ENCODE measurements at regions of chr12 and their contacts with region 1.

Region 1: GRCh38 chr12:124567661-124568373 is 405 bp upstream of the NCOR2 start:
- DNase-seq: peak; percentile 19
- ATAC-seq: peak; percentile 68
- H3K4me3 ChIP-seq: peak overlapping the region; percentile 76 to 90 (median 82)
- H3K27ac ChIP-seq: no peak overlapping the region
- H3K4me1 ChIP-seq: peaks cover 28% of the 10 kb centered on the region
- H3K27me3 ChIP-seq: peaks cover 4 to 17% of the 10 kb centered on the region in 2 experiments; a peak in 4 of 5 replicates
- CTCF ChIP-seq: peak; percentile 46
- EP300 ChIP-seq: no peak
- POLR2A ChIP-seq: no peak
- RAD21 ChIP-seq: no peak

Region 2: DNA sequence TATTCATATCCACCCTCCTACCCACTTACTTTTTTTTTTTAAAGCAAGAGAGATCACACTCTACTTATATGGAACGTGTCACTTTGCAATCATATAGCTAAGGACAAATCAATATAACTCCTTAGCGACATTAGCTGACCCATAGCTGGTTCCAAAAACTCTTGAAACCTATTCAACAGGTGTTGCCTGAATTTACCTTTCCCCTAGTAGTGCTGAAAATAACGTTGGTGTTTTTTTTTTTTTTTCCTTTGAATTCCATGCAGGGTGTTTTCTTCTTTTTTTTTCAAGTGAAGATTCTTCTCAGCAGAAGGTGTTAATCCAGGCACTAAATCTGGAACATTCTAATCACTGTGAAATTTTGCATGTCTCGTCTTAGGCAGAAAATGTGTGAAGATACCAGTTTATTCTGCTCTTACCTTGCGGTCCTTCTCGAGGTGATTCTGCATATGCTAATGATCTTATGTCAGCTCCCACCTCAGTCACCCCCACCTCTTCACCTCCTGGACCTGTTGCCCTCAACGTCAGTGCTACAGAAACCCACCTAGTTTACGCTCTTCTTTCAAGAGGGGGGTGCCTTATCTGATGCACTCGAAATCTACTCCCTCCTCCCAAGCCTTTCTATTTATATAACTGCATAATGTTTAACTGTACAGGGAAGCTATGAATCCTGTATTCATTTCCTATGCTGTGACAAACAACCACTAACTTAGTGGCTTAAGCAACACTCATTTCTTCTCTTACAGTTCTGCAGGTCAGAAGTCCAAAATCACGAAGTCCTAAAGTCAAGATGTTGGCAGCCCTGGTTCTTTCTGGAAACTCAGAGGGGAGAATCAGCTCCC is 1664.7 kb before region 1 on chr12:
- CTCF ChIA-PET with region 1: no interaction called
- POLR2A ChIA-PET with region 1: no interaction called
- in situ Hi-C with region 1: no loop called
- intact Hi-C with region 1: no loop called
- DNase-seq: no peak
- ATAC-seq: no peak; the same call in 2 of the 3 replicates
- H3K4me3 ChIP-seq: peak overlapping the region in 2 of 3 experiments; percentile 7 to 17; a peak in 2 of 6 replicates
- H3K27ac ChIP-seq: no peak overlapping the region
- H3K4me1 ChIP-seq: peaks cover 58% of the 10 kb centered on the region
- H3K27me3 ChIP-seq: no peaks in the 10 kb centered on the region
- CTCF ChIP-seq: no peak
- EP300 ChIP-seq: no peak
- POLR2A ChIP-seq: no peak
- RAD21 ChIP-seq: no peak

Region 3: GRCh38 chr12:124518051-124518932 is 49.5 kb before region 1 on chr12:
- CTCF ChIA-PET with region 1: no interaction called
- POLR2A ChIA-PET with region 1: interaction called, 12 read pairs
- in situ Hi-C with region 1: no loop called
- intact Hi-C with region 1: loop called (anchors 10 kb)
- DNase-seq: peak; percentile 93
- ATAC-seq: peak; percentile 95
- H3K4me3 ChIP-seq: peak overlapping the region; percentile 79 to 85 (median 83)
- H3K27ac ChIP-seq: peak overlapping the region; percentile 95
- H3K4me1 ChIP-seq: peaks cover 37% of the 10 kb centered on the region
- H3K27me3 ChIP-seq: no peaks in the 10 kb centered on the region
- CTCF ChIP-seq: no peak
- EP300 ChIP-seq: peak in 1 of 2 experiments; percentile 9; a peak in 1 of 4 replicates
- POLR2A ChIP-seq: peak in 1 of 2 experiments; percentile 61; a peak in 2 of 4 replicates
- RAD21 ChIP-seq: no peak

Region 4: GRCh38 chr12:124620751-124621660 is 53.2 kb after region 1 on chr12:
- CTCF ChIA-PET with region 1: no interaction called
- POLR2A ChIA-PET with region 1: no interaction called
- in situ Hi-C with region 1: no loop called
- intact Hi-C with region 1: no loop called
- DNase-seq: no peak
- ATAC-seq: peak; percentile 35; the same call in 2 of the 3 replicates
- H3K4me3 ChIP-seq: no peak overlapping the region
- H3K27ac ChIP-seq: no peak overlapping the region
- H3K4me1 ChIP-seq: peaks cover 6% of the 10 kb centered on the region
- H3K27me3 ChIP-seq: peaks cover 7 to 70% of the 10 kb centered on the region in 2 experiments; a peak in 4 of 5 replicates
- CTCF ChIP-seq: no peak
- EP300 ChIP-seq: no peak
- POLR2A ChIP-seq: no peak
- RAD21 ChIP-seq: no peak

Region 5: GRCh38 chr12:124679533-124680371 is 111.9 kb after region 1 on chr12:
- CTCF ChIA-PET with region 1: no interaction called
- POLR2A ChIA-PET with region 1: no interaction called
- in situ Hi-C with region 1: no loop called
- intact Hi-C with region 1: loop called (anchors 2 kb)
- DNase-seq: peak; percentile 51
- ATAC-seq: peak; percentile 78
- H3K4me3 ChIP-seq: peak overlapping the region; percentile 13 to 63 (median 28); a peak in 3 of 6 replicates
- H3K27ac ChIP-seq: no peak overlapping the region
- H3K4me1 ChIP-seq: peaks cover 79% of the 10 kb centered on the region
- H3K27me3 ChIP-seq: peaks cover under 1 to 40% of the 10 kb centered on the region in 2 experiments
- CTCF ChIP-seq: no peak
- EP300 ChIP-seq: no peak
- POLR2A ChIP-seq: no peak
- RAD21 ChIP-seq: no peak

Region 6: DNA sequence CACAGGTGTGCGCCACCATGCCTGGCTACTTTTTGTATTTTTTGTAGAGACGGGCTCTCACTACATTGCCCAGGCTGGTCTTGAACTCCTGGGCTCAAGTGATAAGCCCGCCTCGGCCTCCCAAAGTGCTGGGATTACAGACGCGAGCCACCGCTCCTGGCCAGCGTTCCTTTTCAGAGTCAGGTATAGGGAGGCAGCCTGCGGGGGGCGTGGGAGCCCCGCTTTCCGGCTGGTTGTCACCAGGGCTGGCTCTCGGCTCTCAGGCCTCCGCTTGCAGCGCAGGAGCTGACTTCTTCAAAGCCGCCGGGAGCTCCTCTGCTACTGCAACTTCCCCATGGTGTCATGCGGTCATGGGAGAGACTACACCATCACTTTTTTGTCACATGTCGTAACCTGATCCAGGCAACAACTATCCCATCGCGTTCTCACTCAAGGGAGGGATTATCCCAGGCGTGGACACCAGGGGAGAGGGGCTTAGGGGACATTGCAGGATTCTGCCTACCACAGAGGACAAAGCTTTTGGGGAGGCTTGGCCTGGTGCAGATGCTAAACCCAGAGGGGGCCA is 166.5 kb after region 1 on chr12:
- CTCF ChIA-PET with region 1: no interaction called
- POLR2A ChIA-PET with region 1: no interaction called
- in situ Hi-C with region 1: no loop called
- intact Hi-C with region 1: loop called (anchors 10 kb)
- DNase-seq: peak; percentile 91
- ATAC-seq: peak; percentile 69
- H3K4me3 ChIP-seq: peak overlapping the region in 1 of 3 experiments; percentile 14; a peak in 1 of 6 replicates
- H3K27ac ChIP-seq: no peak overlapping the region
- H3K4me1 ChIP-seq: peaks cover 84% of the 10 kb centered on the region
- H3K27me3 ChIP-seq: no peaks in the 10 kb centered on the region
- CTCF ChIP-seq: no peak
- EP300 ChIP-seq: no peak
- POLR2A ChIP-seq: no peak
- RAD21 ChIP-seq: no peak